ENCODE measurements at regions of chr11 and their contacts with region 1.

Region 1: GRCh38 chr11:14308114-14308896 is 50.7 kb downstream of the RRAS2 start:
- DNase-seq: no peak
- ATAC-seq: peak; percentile 81
- H3K4me3 Mint-ChIP-seq: no peak overlapping the region
- H3K27ac Mint-ChIP-seq: no peak overlapping the region
- H3K4me1 Mint-ChIP-seq: peaks cover 28% of the 10 kb centered on the region
- H3K27me3 Mint-ChIP-seq: no peaks in the 10 kb centered on the region
- CTCF ChIP-seq: peak; percentile 70

Region 2: GRCh38 chr11:14320020-14320419 is 11.7 kb after region 1 on chr11:
- CTCF ChIA-PET with region 1: interaction called, 14 read pairs
- POLR2A ChIA-PET with region 1: interaction called, 3 read pairs
- intact Hi-C with region 1: no loop called
- DNase-seq: peak; percentile 82
- ATAC-seq: peak; percentile 76
- H3K4me3 Mint-ChIP-seq: peak overlapping the region; percentile 26
- H3K27ac Mint-ChIP-seq: peak overlapping the region; percentile 65
- H3K4me1 Mint-ChIP-seq: peaks cover 60% of the 10 kb centered on the region
- H3K27me3 Mint-ChIP-seq: no peaks in the 10 kb centered on the region
- CTCF ChIP-seq: no peak

Region 3: GRCh38 chr11:14330881-14331280 is 22.6 kb after region 1 on chr11:
- CTCF ChIA-PET with region 1: interaction called, 10 read pairs
- POLR2A ChIA-PET with region 1: interaction called, 3 read pairs
- intact Hi-C with region 1: no loop called
- DNase-seq: no peak
- ATAC-seq: no peak
- H3K4me3 Mint-ChIP-seq: no peak overlapping the region
- H3K27ac Mint-ChIP-seq: no peak overlapping the region
- H3K4me1 Mint-ChIP-seq: peaks cover 46% of the 10 kb centered on the region
- H3K27me3 Mint-ChIP-seq: no peaks in the 10 kb centered on the region
- CTCF ChIP-seq: no peak

Region 4: GRCh38 chr11:14350215-14350614 is 41.9 kb after region 1 on chr11:
- CTCF ChIA-PET with region 1: interaction called, 10 read pairs
- POLR2A ChIA-PET with region 1: interaction called, 4 read pairs
- intact Hi-C with region 1: loop called (anchors 5 kb)
- DNase-seq: peak; percentile 23
- ATAC-seq: peak; percentile 53
- H3K4me3 Mint-ChIP-seq: no peak overlapping the region
- H3K27ac Mint-ChIP-seq: no peak overlapping the region
- H3K4me1 Mint-ChIP-seq: peaks cover 43% of the 10 kb centered on the region
- H3K27me3 Mint-ChIP-seq: no peaks in the 10 kb centered on the region
- CTCF ChIP-seq: no peak

Region 5: GRCh38 chr11:14418803-14419417 is 110.6 kb after region 1 on chr11:
- CTCF ChIA-PET with region 1: interaction called, 90 read pairs
- POLR2A ChIA-PET with region 1: no interaction called
- intact Hi-C with region 1: loop called (anchors 5 kb)
- DNase-seq: peak; percentile 15
- ATAC-seq: no peak
- H3K4me3 Mint-ChIP-seq: no peak overlapping the region
- H3K27ac Mint-ChIP-seq: no peak overlapping the region
- H3K4me1 Mint-ChIP-seq: peaks cover 46% of the 10 kb centered on the region
- H3K27me3 Mint-ChIP-seq: no peaks in the 10 kb centered on the region
- CTCF ChIP-seq: peak; percentile 71

Measured in activated CD8-positive, alpha-beta T cell treated with anti-CD3 and anti-CD28 coated beads for 36 hours (primary cell).